ENCODE measurements at regions of chr13 and their contacts with region 1.

Region 1: GRCh38 chr13:21458813-21459701 is at the start of gene ZDHHC20:
- DNase-seq: peak; percentile 78
- ATAC-seq: peak; percentile 98
- H3K4me3 ChIP-seq: peak within 1 kb of the TSS; percentile 88
- H3K27ac ChIP-seq: peak within 1 kb of the TSS; percentile 76
- H3K4me1 ChIP-seq: no peaks in the 10 kb centered on the region
- H3K27me3 ChIP-seq: no peaks in the 10 kb centered on the region
- CTCF ChIP-seq: no peak
- POLR2A ChIP-seq: peak; percentile 71
- RAD21 ChIP-seq: 0 out of 2 replicates have a peak, but pooled peaks have one; percentile 4
- total RNA-seq, gene ZDHHC20: 72.4 and 104 TPM in 2 replicates

Region 2: DNA sequence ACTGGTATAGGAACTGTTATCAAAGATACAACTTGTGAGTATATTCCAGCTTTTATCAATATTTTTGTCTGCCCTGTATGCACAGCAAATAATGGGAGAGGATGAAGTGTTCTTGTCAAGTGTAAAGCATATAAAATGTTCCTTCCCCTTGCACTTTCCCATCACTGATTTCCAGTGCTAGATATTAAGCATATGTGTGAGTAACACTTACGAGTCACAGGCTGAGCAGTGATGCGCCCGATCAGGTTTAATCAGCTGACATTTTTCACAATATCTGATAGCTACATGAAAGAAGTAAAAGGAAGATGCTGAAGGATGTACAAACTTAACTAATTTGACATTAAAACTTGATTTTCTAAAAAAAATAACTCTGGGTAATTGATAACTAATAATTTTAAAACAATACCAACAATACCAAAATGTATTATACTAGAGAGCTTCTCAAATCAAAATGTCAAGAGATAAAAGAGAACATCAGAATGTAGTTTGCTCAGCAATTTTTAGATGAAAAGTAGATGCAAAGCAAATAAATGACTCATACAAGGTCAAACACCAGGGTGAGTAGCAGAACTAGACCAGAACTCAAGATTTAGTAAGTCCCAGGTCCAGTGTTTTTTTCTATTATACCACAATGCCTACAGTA is 56.4 kb before region 1 on chr13:
- CTCF ChIA-PET with region 1: no interaction called
- POLR2A ChIA-PET with region 1: no interaction called
- dilution Hi-C with region 1: no loop called
- in situ Hi-C with region 1: no loop called
- intact Hi-C with region 1: loop called (anchors 5 kb)
- DNase-seq: peak; percentile 71
- ATAC-seq: peak; percentile 77
- H3K4me3 ChIP-seq: no peak overlapping the region
- H3K27ac ChIP-seq: no peak overlapping the region
- H3K4me1 ChIP-seq: no peaks in the 10 kb centered on the region
- H3K27me3 ChIP-seq: no peaks in the 10 kb centered on the region
- CTCF ChIP-seq: no peak
- POLR2A ChIP-seq: no peak
- RAD21 ChIP-seq: no peak